ENCODE measurements at regions of chr10 and their contacts with region 1.

Region 1: GRCh38 chr10:49394933-49395740 is 752 bp downstream of the DRGX start:
- DNase-seq: no peak
- H3K4me3 ChIP-seq: no peak overlapping the region
- H3K27ac ChIP-seq: no peak overlapping the region
- H3K4me1 ChIP-seq: peaks cover 19% of the 10 kb centered on the region
- H3K27me3 ChIP-seq: peaks cover 26% of the 10 kb centered on the region
- CTCF ChIP-seq: no peak
- POLR2A ChIP-seq: no peak

Region 2: DNA sequence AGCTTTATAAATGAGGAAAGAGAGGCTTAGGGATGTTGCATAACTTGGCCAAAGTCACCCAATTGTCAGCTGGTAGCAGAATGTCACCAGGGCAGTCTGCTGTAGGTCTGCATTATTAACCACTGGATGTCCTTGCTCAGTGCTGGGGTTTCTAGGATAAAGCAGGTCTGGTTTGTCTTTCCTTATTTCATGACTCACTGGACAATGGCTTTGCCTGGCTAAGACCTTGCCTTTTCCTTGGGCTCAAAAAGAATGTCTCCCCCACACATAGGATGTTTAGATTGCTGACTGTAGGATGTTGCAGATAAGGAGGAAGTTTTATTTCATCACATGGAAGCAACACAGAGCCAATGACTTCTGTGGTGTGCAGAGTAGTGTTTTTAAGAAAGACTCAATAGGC is 681.0 kb before region 1 on chr10:
- intact Hi-C with region 1: loop called (anchors 5 kb)
- DNase-seq: no peak
- H3K4me3 ChIP-seq: no peak overlapping the region
- H3K27ac ChIP-seq: no peak overlapping the region
- H3K4me1 ChIP-seq: no peaks in the 10 kb centered on the region
- H3K27me3 ChIP-seq: no peaks in the 10 kb centered on the region
- CTCF ChIP-seq: no peak
- POLR2A ChIP-seq: no peak